ENCODE measurements at regions of chr14 and their contacts with region 1.

Region 1: DNA sequence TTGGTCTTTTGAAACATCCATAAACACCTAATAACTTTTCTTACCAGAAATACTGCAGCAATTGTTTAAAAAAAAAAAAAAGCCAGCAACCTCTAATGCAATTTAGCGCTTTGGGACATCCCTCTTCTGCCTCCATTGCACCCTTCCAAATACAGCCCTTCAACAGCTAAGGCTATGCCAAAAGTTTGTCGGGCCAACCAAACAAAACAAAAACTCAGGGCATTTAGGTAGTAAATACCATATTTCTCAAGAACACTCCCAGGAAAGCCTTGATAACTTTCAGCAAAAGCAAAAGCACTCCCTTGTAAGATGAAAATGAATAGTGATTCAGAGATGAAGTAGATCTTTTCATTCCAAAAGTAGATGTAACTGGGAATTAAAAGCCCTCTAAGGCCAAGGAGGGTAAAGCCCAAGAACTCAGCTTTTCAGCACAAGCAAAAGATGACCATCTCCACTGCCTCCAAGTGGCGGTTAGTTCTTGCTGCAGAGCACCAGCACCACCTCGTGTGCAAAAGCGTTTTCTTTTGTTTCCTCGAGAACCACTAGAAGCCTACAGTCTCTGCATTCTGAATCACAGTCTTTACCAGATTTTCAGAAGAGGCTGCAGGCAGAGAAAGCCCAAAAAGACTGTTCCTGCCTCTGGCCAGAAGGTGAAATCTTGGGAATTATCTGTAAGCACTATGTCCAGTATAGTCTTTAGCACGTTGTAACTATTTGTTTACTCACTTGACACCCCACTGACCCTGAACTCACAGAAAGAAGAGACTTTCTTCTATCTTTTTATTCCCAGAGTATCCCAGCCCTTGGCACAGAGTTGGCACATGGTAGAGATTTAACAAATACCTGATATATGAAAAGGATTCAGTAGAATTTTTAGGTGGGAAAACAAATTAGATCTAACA is 53.1 kb downstream of the SIX6 start:
- DNase-seq: peak; percentile 50 to 60
- H3K4me3 ChIP-seq: no peak overlapping the region
- H3K27ac ChIP-seq: no peak overlapping the region
- H3K4me1 ChIP-seq: peaks cover 0 to 15% of the 10 kb centered on the region in 2 donors
- H3K27me3 ChIP-seq: no peaks in the 10 kb centered on the region
- CTCF ChIP-seq: peak in 5 of 6 experiments; percentile 45 to 68 (median 67)
- POLR2A ChIP-seq: no peak

Region 2: GRCh38 chr14:60349663-60350365 is 212.3 kb before region 1 on chr14:
- intact Hi-C with region 1: loop called (anchors 5 kb)
- DNase-seq: peak; percentile 13 to 18
- H3K4me3 ChIP-seq: no peak overlapping the region
- H3K27ac ChIP-seq: no peak overlapping the region
- H3K4me1 ChIP-seq: no peaks in the 10 kb centered on the region
- H3K27me3 ChIP-seq: no peaks in the 10 kb centered on the region
- CTCF ChIP-seq: peak in 5 of 6 experiments; percentile 39 to 67 (median 50)
- POLR2A ChIP-seq: no peak

Region 3: GRCh38 chr14:60713513-60713912 is 151.4 kb after region 1 on chr14:
- intact Hi-C with region 1: no loop called
- DNase-seq: no peak
- H3K4me3 ChIP-seq: no peak overlapping the region
- H3K27ac ChIP-seq: no peak overlapping the region
- H3K4me1 ChIP-seq: no peaks in the 10 kb centered on the region
- H3K27me3 ChIP-seq: no peaks in the 10 kb centered on the region
- CTCF ChIP-seq: no peak
- POLR2A ChIP-seq: no peak